Dorsolateral prefrontal cortex (tissue), 120 donors: ENCODE measurements at regions of chr19 and their contacts with region 1.

Region 1: DNA sequence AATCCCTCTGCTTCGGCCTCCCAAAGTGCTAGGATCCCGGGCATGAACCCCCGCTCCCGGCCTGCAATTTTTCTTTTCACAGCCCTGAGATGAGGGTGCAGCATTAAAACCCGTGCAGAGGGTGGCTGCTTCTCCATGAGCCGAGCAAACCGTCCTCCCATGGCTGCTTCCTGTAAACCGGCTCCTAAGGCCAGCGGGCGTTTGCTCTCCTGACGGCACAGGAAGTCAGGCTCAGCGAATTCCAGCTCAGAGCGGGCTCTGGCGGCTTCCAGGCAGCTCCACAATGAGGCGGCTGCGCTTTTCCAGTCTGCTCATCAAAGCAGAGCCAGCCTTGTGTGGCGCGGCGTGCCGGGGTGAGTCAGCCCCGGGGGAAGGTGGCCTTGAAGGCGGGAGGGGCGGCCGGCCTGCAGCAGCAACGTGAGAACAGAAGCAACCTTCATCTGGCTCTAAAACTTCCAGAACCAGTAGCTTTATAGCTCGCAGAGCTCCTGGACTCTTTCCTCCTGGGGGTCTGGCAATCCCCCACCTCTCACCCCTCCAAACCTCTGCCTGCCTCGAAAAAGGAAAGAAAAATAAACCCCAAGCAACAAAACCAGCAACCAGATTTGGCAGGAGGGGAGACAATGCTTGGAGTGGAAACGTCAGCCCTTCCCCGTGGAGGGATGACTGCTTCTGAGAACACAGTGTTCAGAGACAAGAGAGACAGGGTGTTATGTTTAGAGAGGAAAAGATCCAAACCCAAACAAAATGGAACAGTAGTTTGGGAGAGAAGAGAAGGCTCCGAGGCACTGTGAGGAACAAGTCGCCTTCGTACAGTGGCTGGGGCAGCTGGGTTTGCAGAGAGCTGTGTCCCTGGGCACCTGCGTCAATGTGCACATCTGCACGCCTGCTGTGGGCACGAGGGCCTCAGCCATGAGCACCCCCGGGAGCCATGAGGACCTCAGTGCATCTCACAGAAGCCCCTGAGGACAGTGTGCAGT is 67.8 kb downstream of the GADD45B start:
- DNase-seq: peak; percentile 83 to 97 (median 94)
- H3K4me3 ChIP-seq: peak overlapping the region in 55 of 59 donors; percentile 2 to 58 (median 37)
- H3K27ac ChIP-seq: peak overlapping the region; percentile 89 to 100 (median 98)
- H3K27me3 ChIP-seq: no peaks in the 10 kb centered on the region
- CTCF ChIP-seq: peak in 38 of 56 donors; percentile 3 to 56 (median 33)

Region 2: GRCh38 chr19:2494444-2495129 is 49.2 kb before region 1 on chr19:
- intact Hi-C with region 1: loop called in 1 of 2 experiments (anchors 5 kb)
- DNase-seq: peak in 8 of 10 donors; percentile 42 to 83 (median 72)
- H3K4me3 ChIP-seq: peak overlapping the region; percentile 33 to 85 (median 68)
- H3K27ac ChIP-seq: peak overlapping the region in 55 of 59 donors; percentile 15 to 89 (median 75)
- H3K27me3 ChIP-seq: peaks cover 0 to 3% (median 0%) of the 10 kb centered on the region in 45 donors
- CTCF ChIP-seq: peak in 6 of 56 donors; percentile 9 to 22 (median 12)

Region 3: DNA sequence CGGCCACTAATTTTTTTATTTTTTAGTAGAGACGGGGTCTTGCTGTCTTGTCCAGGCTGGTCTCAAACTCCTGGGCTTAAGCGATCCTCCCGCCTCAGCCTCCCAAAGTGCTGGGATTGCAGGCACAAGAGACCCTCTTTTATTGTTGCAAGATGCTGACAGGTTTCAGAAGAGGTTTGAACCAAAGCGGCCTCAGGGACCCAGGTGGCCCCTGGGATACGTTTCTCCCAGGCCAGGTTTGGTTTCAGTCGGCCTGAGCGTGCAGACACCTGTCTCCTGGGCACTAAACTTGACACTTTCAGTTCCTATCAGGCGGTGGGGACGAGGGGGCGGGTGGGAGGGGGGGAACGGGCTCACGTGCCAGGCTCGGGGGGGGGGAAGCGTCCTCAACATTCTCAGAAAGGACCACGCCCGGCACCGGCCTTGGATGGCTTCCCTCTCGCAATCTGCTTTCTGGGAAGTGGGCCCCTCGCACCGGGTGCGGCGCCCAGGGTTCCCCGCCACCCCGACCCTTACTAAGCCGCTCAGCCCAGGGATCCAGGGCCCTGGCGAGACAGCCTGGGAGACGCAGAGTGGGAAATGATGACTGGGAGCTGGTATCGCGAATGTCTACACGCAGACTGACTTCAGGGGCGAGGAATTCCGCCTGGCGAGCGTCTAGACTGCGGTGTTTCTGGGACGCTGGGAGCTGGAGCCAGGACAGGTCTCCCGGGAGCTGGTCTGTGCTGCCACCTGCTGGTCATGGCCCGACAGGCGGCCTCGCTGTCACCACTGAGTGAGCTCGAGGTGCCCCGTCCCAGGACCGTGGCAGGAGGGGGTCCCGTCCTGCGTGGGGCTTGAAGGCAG is 67.1 kb after region 1 on chr19:
- intact Hi-C with region 1: loop called in 1 of 2 experiments (anchors 5 kb)
- DNase-seq: peak; percentile 85 to 93 (median 92)
- H3K4me3 ChIP-seq: peak overlapping the region in 58 of 59 donors; percentile 28 to 71 (median 53)
- H3K27ac ChIP-seq: peak overlapping the region in 40 of 59 donors; percentile 2 to 84 (median 56)
- H3K27me3 ChIP-seq: no peaks in the 10 kb centered on the region
- CTCF ChIP-seq: peak; percentile 94 to 100 (median 98)